WTC11 (cell line): ENCODE measurements at regions of chr20 and their contacts with region 1.

Region 1: GRCh38 chr20:50575847-50576720 is 65.9 kb downstream of the PTPN1 start:
- DNase-seq: peak; percentile 74
- ATAC-seq: peak; percentile 92
- H3K4me3 Mint-ChIP-seq: no peak overlapping the region
- H3K27ac Mint-ChIP-seq: no peak overlapping the region
- H3K4me1 Mint-ChIP-seq: no peaks in the 10 kb centered on the region
- H3K27me3 Mint-ChIP-seq: no peaks in the 10 kb centered on the region
- CTCF ChIP-seq: peak; percentile 42; the same call in 1 of the 2 replicates

Region 2: GRCh38 chr20:50376932-50377661 is 199.0 kb before region 1 on chr20:
- CTCF ChIA-PET with region 1: no interaction called
- POLR2A ChIA-PET with region 1: no interaction called
- DNase-seq: no peak
- ATAC-seq: no peak
- H3K4me3 Mint-ChIP-seq: no peak overlapping the region
- H3K27ac Mint-ChIP-seq: no peak overlapping the region
- H3K4me1 Mint-ChIP-seq: peaks cover 4% of the 10 kb centered on the region; the same call in 1 of the 2 replicates
- H3K27me3 Mint-ChIP-seq: no peaks in the 10 kb centered on the region
- CTCF ChIP-seq: no peak

Region 3: DNA sequence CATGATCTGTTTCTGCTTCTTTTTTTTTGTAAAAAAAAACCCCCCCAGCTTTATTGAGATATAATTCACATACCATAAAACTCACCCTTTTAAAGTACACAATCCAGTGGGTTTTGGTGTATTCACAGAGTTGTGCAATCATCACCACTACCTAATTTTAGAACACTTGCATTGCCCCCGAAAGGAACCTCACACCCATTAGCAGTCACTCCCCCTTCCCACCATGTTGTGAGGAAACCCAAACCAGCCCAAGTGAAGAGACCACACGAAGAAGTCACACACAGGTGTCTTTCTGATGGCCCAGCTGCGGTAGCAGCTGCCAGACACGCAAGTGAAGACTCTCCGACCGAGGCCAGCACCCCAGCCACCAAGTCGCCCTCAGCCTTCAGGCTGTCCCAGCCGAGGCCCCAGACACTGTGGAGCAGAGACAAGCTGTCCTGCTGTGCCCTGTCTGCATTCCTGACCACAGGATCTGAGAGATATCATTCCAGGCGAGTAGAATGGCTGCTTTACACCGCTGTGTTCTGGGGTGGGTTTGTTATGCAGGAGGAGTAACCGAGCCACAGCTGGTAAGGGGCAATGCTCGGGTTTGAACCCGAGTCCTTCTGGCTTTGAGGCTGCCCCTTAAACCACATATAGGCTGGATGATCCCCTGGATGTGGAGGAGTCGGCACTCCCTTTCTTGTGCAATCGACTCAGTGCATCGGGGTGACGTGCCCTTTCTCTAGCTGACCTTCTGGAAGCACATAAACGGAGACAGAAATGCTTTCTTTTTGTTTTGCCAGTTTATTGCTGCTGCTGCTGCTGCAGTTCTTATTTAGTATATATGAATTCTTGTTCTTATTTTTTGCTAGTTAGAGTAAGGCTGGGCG is 125.0 kb before region 1 on chr20:
- CTCF ChIA-PET with region 1: no interaction called
- POLR2A ChIA-PET with region 1: no interaction called
- DNase-seq: peak; percentile 66
- ATAC-seq: peak; percentile 92
- H3K4me3 Mint-ChIP-seq: peak overlapping the region; percentile 14; the same call in 1 of the 2 replicates
- H3K27ac Mint-ChIP-seq: peak overlapping the region; percentile 71
- H3K4me1 Mint-ChIP-seq: peaks cover 21% of the 10 kb centered on the region
- H3K27me3 Mint-ChIP-seq: no peaks in the 10 kb centered on the region; the same call in 1 of the 2 replicates
- CTCF ChIP-seq: no peak

Region 4: DNA sequence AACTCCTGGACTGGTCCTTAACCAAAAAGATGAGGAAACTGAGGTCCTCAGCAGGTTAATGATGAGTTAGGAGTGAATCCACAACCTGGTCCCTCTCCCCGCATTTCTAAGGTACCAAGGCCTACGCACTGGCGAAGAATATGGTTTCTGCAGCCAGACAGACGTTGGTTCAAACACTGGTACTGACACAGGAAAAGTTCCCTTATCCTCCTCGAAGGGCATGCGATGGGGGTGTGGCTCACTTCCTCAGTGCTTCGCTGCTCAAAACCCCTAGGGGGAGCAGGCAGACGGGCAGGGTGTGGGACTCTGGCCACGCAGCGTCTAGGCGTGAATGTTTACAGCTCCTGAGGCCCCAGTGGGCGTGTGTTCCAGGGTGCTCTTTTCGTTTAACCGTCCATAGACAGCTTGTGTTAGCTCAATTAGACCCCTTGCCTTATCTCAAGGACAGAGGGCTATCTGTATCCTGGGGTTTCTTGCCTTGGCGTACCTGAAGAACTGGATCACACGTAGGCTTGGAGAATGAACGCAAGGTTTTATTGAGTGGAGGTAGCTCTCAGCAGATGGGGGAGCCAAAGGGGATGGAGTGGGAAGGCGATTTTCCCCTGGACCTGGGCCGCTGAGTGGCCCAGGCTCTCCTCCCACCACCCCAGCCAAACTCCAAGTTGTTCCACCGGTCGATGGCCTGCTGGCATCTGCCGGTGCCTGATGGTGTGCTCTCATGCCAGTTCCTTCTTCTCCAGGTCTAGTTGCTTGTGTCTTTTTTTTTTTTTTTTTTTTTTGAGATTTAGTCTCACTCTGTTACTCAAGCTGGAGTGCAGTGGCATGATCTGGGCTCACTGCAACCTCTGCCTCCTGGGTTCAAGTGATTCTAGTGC is 97.7 kb before region 1 on chr20:
- CTCF ChIA-PET with region 1: interaction called, 12 read pairs
- POLR2A ChIA-PET with region 1: no interaction called
- DNase-seq: peak; percentile 78
- ATAC-seq: peak; percentile 99
- H3K4me3 Mint-ChIP-seq: no peak overlapping the region
- H3K27ac Mint-ChIP-seq: no peak overlapping the region
- H3K4me1 Mint-ChIP-seq: peaks cover 6% of the 10 kb centered on the region; the same call in 1 of the 2 replicates
- H3K27me3 Mint-ChIP-seq: no peaks in the 10 kb centered on the region
- CTCF ChIP-seq: peak; percentile 60

Region 5: DNA sequence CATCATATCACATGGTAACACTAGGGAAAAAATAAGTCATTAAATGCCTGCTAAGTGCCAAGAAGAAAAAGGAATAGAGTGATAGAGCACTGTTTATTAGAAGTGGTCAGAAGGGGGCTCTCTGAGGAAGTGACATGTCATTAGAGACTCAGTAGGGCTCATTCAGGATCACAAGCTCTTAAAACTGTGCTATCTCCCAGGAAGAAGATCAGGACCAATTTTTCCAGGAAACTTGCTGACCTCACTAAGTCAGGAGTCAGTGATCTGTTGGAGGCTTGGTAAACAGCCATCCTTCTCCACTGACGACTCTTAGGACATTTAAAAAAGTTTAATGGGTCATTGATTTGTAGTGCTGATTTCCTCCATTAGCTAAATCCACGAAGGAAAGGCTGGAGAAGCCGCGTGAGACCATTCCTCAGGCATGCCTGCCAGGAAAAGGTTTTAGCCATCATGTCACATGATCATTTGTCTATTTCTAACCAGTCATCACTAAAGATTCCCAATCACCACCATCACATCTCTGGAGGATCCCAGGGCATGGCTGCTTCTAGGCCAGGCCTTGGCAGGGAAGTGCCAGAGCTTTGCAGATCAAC is 71.8 kb before region 1 on chr20:
- CTCF ChIA-PET with region 1: interaction called, 13 read pairs
- POLR2A ChIA-PET with region 1: no interaction called
- DNase-seq: no peak
- ATAC-seq: 0 out of 2 replicates have a peak, but pooled peaks have one; percentile 17
- H3K4me3 Mint-ChIP-seq: no peak overlapping the region
- H3K27ac Mint-ChIP-seq: no peak overlapping the region
- H3K4me1 Mint-ChIP-seq: peaks cover 20% of the 10 kb centered on the region
- H3K27me3 Mint-ChIP-seq: peaks cover 3% of the 10 kb centered on the region
- CTCF ChIP-seq: no peak

Region 6: DNA sequence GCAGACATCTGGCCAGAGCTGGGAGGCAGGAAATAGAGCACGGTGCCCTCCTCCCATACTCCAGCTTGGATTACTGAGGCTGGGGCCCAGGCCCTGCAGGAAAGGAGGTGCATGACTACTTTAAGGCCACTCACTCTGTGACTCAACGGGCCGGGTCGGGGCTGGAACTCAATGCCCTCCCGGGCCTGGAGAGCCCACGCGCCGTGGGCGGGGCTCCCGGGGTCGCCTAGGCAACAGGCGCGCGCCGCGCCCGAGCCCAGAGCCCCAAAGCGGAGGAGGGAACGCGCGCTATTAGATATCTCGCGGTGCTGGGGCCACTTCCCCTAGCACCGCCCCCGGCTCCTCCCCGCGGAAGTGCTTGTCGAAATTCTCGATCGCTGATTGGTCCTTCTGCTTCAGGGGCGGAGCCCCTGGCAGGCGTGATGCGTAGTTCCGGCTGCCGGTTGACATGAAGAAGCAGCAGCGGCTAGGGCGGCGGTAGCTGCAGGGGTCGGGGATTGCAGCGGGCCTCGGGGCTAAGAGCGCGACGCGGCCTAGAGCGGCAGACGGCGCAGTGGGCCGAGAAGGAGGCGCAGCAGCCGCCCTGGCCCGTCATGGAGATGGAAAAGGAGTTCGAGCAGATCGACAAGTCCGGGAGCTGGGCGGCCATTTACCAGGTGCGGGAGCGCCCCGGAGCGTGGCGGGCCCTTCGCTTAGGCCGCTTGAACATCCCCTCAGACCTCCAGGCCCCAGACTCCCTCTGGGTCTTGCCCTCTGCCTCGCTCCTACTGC is 66.0 kb before region 1 on chr20 and contains the start of gene PTPN1:
- CTCF ChIA-PET with region 1: interaction called, 13 read pairs
- POLR2A ChIA-PET with region 1: no interaction called
- DNase-seq: peak; percentile 99
- ATAC-seq: peak; percentile 97
- H3K4me3 Mint-ChIP-seq: peak within 1 kb of the TSS; percentile 93
- H3K27ac Mint-ChIP-seq: peak within 1 kb of the TSS; percentile 93
- H3K4me1 Mint-ChIP-seq: peaks cover 41% of the 10 kb centered on the region
- H3K27me3 Mint-ChIP-seq: no peaks in the 10 kb centered on the region
- CTCF ChIP-seq: no peak
- total RNA-seq, gene PTPN1: 23.4 to 29.4 TPM (median 25.3 TPM) in 3 replicates

Region 7: GRCh38 chr20:50588034-50588611 is 12.0 kb after region 1 on chr20:
- CTCF ChIA-PET with region 1: interaction called, 20 read pairs
- POLR2A ChIA-PET with region 1: no interaction called
- DNase-seq: peak; percentile 93
- ATAC-seq: peak; percentile 89
- H3K4me3 Mint-ChIP-seq: no peak overlapping the region
- H3K27ac Mint-ChIP-seq: no peak overlapping the region
- H3K4me1 Mint-ChIP-seq: no peaks in the 10 kb centered on the region
- H3K27me3 Mint-ChIP-seq: no peaks in the 10 kb centered on the region
- CTCF ChIP-seq: peak; percentile 88